ENCODE measurements at regions of chr1 and their contacts with region 1.

Region 1: DNA sequence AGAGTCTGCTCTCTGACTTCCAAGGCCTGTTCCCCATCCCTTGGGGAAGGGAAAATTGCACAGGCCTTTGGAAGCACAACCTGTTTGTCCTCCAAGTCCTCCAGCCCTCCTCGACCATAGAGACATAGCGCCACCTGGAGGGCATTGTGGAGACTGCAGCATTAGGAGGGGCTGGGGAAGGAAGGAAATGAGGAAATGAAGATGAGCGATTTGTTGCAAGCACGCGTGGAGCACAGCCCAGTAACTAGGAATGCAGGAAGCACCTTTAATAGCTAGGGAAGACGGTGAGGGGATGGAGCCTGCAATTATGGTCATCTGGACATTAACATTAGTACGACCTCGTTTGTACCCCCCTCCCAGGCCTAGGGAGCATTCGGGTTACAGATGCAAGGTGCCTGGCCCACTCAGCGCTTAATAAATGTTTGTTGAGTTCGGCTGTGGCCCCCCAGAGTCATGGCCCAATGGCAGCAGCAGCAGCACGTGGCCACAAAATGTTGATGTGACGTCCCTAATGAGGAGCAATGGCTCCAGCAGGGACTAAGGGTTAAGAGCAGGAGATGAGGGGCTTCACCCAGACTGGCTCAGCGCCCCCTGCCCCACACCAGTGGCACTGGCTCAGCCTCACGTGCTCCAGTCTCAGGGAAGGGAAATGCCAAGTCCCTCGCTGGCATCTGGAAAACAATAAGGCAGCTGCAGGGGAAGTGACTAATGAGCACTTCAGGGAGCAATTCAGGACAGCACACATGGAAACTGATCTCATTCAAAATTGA is 8.0 kb upstream of the CAMK2N1 start:
- DNase-seq: peak; percentile 74 to 85 (median 81)
- H3K4me3 ChIP-seq: peak overlapping the region in 1 of 3 experiments; percentile 33
- H3K4me3 Mint-ChIP-seq: no peak overlapping the region
- H3K27ac ChIP-seq: no peak overlapping the region
- H3K27ac Mint-ChIP-seq: no peak overlapping the region
- H3K4me1 ChIP-seq: peaks cover 13 to 15% of the 10 kb centered on the region in 2 donors
- H3K4me1 Mint-ChIP-seq: peaks cover 8% of the 10 kb centered on the region
- H3K27me3 ChIP-seq: peaks cover 2 to 17% of the 10 kb centered on the region in 2 donors
- H3K27me3 Mint-ChIP-seq: peaks cover 14 to 43% (median 22%) of the 10 kb centered on the region in 3 donors
- CTCF ChIP-seq: peak; percentile 96

Region 2: GRCh38 chr1:19910650-19911049 is 583.4 kb before region 1 on chr1:
- intact Hi-C with region 1: loop called in 1 of 2 experiments (anchors 5 kb)
- DNase-seq: no peak
- H3K4me3 ChIP-seq: no peak overlapping the region
- H3K4me3 Mint-ChIP-seq: no peak overlapping the region
- H3K27ac ChIP-seq: no peak overlapping the region
- H3K27ac Mint-ChIP-seq: no peak overlapping the region
- H3K4me1 ChIP-seq: no peaks in the 10 kb centered on the region
- H3K4me1 Mint-ChIP-seq: no peaks in the 10 kb centered on the region
- H3K27me3 ChIP-seq: no peaks in the 10 kb centered on the region
- H3K27me3 Mint-ChIP-seq: no peaks in the 10 kb centered on the region
- CTCF ChIP-seq: no peak

Region 3: GRCh38 chr1:20212685-20213331 is 281.2 kb before region 1 on chr1:
- intact Hi-C with region 1: loop called (anchors 5 kb)
- DNase-seq: peak; percentile 7 to 41 (median 17)
- H3K4me3 ChIP-seq: no peak overlapping the region
- H3K4me3 Mint-ChIP-seq: peak overlapping the region in 1 of 2 donors; percentile 67
- H3K27ac ChIP-seq: no peak overlapping the region
- H3K27ac Mint-ChIP-seq: no peak overlapping the region
- H3K4me1 ChIP-seq: no peaks in the 10 kb centered on the region
- H3K4me1 Mint-ChIP-seq: peaks cover 5% of the 10 kb centered on the region
- H3K27me3 ChIP-seq: peaks cover 19 to 21% of the 10 kb centered on the region in 2 donors
- H3K27me3 Mint-ChIP-seq: peaks cover 24 to 45% (median 24%) of the 10 kb centered on the region in 3 donors
- CTCF ChIP-seq: peak; percentile 85

Region 4: DNA sequence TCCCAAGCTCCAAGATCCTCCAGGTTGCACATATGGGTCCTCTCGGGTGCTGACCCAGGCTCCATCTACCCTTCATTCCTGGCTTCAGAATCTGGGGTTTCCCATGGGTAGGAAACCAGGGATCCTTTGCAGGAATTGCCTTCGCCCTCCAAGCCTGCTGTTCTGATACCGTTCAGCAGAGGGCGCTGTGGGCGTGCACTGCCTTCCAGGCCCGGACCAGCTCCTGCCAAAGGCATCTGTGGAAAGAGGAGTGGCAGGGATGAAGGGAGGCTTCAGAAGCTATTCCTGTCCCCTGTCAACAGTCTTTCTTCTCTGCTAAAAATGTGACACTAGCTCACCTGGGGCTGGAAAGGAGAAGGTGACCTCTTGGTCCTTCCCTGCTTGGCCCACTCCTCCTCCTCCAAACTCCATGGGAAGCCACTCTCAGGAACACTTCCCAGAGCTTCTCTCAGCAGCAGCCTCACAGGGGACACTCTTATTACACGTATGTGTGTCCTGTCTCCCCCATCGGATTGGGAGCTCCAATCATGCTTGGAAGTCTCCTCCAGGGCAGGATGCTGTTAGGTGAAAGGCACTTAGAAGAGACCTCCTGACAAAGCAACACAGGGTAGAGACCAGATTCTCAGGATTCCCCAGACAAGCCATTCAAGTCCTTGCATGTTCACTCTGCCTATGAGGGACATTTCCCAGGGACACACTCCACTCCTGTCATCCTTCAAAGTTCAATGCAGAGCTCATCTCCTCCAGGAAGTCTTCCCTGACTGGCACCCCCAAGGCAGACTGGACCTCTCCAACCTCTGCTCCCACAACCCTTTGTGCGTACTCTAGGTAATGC is 132.0 kb before region 1 on chr1:
- intact Hi-C with region 1: loop called in 1 of 2 experiments (anchors 5 kb)
- DNase-seq: peak in 1 of 3 donors; percentile 1
- H3K4me3 ChIP-seq: no peak overlapping the region
- H3K4me3 Mint-ChIP-seq: peak overlapping the region in 1 of 2 donors; percentile 16
- H3K27ac ChIP-seq: no peak overlapping the region
- H3K27ac Mint-ChIP-seq: no peak overlapping the region
- H3K4me1 ChIP-seq: no peaks in the 10 kb centered on the region
- H3K4me1 Mint-ChIP-seq: no peaks in the 10 kb centered on the region
- H3K27me3 ChIP-seq: peaks cover 15 to 42% of the 10 kb centered on the region in 2 donors
- H3K27me3 Mint-ChIP-seq: peaks cover 43 to 56% (median 45%) of the 10 kb centered on the region in 3 donors
- CTCF ChIP-seq: peak; percentile 73

Region 5: DNA sequence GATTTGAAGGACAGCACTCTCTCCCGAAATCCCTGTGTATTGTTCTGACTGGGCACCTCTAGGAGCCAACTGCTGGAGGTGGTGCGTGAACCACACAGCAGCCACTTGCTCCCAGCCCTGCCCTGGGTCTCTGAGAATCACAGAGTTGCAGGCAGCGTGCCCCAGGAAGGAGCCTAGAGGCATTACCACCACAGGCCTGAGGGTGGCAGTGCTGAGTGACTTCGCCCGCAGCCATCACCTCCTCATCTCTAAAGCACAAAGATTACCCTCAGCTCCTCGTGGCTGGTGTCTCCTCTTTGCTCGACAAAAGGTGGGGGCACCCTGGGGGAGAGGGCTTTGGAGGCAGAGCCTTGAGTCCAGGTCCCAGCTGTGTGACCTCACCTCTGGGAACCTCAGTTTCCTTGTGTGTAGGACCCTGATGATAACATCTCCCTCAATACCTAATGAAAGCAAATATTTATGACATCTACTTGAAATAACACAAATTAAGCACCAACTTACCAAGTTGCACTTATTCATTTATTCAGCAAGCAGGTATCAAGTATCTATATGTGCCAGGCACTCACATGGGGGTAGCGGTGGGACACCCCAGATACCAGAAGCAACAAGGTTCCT is 117.0 kb before region 1 on chr1:
- intact Hi-C with region 1: loop called (anchors 2 to 5 kb)
- DNase-seq: peak in 2 of 3 donors; percentile 7 to 10
- H3K4me3 ChIP-seq: no peak overlapping the region
- H3K4me3 Mint-ChIP-seq: no peak overlapping the region
- H3K27ac ChIP-seq: no peak overlapping the region
- H3K27ac Mint-ChIP-seq: no peak overlapping the region
- H3K4me1 ChIP-seq: no peaks in the 10 kb centered on the region
- H3K4me1 Mint-ChIP-seq: no peaks in the 10 kb centered on the region
- H3K27me3 ChIP-seq: peaks cover 0 to 5% of the 10 kb centered on the region in 2 donors
- H3K27me3 Mint-ChIP-seq: peaks cover 12 to 17% (median 12%) of the 10 kb centered on the region in 3 donors
- CTCF ChIP-seq: peak; percentile 89

Region 6: DNA sequence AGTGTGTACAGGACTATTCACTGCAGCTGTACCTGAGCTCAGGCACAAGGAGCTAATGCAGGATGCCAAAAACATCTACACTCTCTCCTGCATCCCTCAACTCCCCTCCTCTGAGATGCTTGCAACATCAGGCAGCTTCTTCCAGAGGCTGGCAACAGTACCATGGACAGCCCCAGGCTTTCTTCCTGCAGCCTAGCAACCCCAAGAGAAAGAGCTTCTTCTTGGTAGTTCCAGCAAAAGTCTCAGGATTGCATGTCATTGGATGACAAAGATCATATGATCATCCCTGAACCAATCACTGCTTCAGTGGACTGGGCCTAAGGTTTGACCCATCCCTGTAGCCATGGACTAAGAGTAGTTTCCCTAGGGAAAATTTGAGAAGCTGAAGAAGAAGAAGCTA is 54.7 kb before region 1 on chr1:
- intact Hi-C with region 1: no loop called
- DNase-seq: no peak
- H3K4me3 ChIP-seq: no peak overlapping the region
- H3K4me3 Mint-ChIP-seq: no peak overlapping the region
- H3K27ac ChIP-seq: no peak overlapping the region
- H3K27ac Mint-ChIP-seq: no peak overlapping the region
- H3K4me1 ChIP-seq: no peaks in the 10 kb centered on the region
- H3K4me1 Mint-ChIP-seq: no peaks in the 10 kb centered on the region
- H3K27me3 ChIP-seq: no peaks in the 10 kb centered on the region
- H3K27me3 Mint-ChIP-seq: peaks cover 8 to 15% (median 9%) of the 10 kb centered on the region in 3 donors
- CTCF ChIP-seq: no peak

Region 7: GRCh38 chr1:20981915-20982314 is 487.9 kb after region 1 on chr1:
- intact Hi-C with region 1: no loop called
- DNase-seq: no peak
- H3K4me3 ChIP-seq: no peak overlapping the region
- H3K4me3 Mint-ChIP-seq: no peak overlapping the region
- H3K27ac ChIP-seq: no peak overlapping the region
- H3K27ac Mint-ChIP-seq: no peak overlapping the region
- H3K4me1 ChIP-seq: no peaks in the 10 kb centered on the region
- H3K4me1 Mint-ChIP-seq: no peaks in the 10 kb centered on the region
- H3K27me3 ChIP-seq: no peaks in the 10 kb centered on the region
- H3K27me3 Mint-ChIP-seq: no peaks in the 10 kb centered on the region
- CTCF ChIP-seq: no peak

Measured in CD14-positive monocyte (primary cell).